GM12878 (cell line): ENCODE measurements at regions of chr16 and their contacts with region 1.

Region 1: DNA sequence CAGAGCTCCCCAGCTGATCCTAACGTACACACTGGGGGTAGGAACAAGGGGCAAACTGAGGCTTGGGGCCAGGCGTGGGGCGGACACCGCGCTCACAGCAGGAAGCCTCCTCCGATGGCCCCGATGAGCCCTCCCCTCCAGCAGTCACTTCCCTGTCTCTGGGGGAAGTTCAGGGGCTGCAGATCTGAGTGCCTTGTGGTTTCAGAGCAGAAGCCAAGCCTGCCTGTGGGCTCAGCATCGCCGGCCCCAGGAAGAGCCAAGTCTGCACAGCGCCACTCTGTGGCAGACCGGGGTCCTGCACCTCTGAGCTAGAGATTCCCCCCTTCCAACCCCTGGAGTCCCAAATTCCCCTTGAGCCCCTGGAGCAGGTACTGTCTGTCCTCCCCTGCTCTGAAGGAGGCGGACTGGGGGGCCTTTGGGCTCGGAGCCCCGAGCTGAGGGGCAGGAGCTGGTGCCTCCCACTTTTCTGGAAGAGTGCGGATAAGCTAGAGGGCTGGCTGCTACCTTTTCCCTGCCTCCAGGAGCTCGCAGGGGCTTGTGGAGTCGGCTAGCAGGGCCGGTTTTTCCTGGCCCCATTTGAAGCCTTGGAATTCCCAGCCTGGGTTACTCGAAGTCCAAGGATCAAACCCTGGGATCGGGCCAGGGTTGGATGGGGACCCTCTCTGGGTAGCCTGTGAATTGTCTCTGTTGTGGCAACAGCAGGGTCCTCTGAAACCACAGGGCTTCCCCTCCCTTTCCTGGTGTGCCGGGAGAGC is 2.9 kb downstream of the GSE1 start:
- DNase-seq: peak; percentile 47
- ATAC-seq: peak; percentile 68
- H3K4me3 ChIP-seq: peak overlapping the region; percentile 95; the same call in 1 of the 2 replicates
- H3K27ac ChIP-seq: peak overlapping the region; percentile 82
- H3K4me1 ChIP-seq: peaks cover 33% of the 10 kb centered on the region
- H3K27me3 ChIP-seq: no peaks in the 10 kb centered on the region
- CTCF ChIP-seq: peak; percentile 91 to 98 (median 98)
- EP300 ChIP-seq: no peak
- POLR2A ChIP-seq: peak; percentile 53; the same call in 1 of the 2 replicates
- RAD21 ChIP-seq: peak; percentile 61

Region 2: GRCh38 chr16:85428168-85428898 is 187.7 kb before region 1 on chr16:
- CTCF ChIA-PET with region 1: interaction called, 17 read pairs
- POLR2A ChIA-PET with region 1: no interaction called
- RAD21 ChIA-PET with region 1: interaction called, 5 read pairs
- SMC1A ChIA-PET with region 1: interaction called, 7 read pairs
- in situ Hi-C with region 1: loop called (anchors 25 kb)
- intact Hi-C with region 1: no loop called
- DNase-seq: no peak
- ATAC-seq: peak; percentile 99
- H3K4me3 ChIP-seq: no peak overlapping the region
- H3K27ac ChIP-seq: no peak overlapping the region
- H3K4me1 ChIP-seq: no peaks in the 10 kb centered on the region
- H3K27me3 ChIP-seq: peaks cover 0 to 3% of the 10 kb centered on the region in 2 experiments; a peak in 2 of 4 replicates
- CTCF ChIP-seq: peak; percentile 61 to 66 (median 62)
- EP300 ChIP-seq: no peak
- POLR2A ChIP-seq: no peak
- RAD21 ChIP-seq: 0 out of 2 replicates have a peak, but pooled peaks have one; percentile 25

Region 3: GRCh38 chr16:85448557-85449197 is 167.4 kb before region 1 on chr16:
- CTCF ChIA-PET with region 1: interaction called, 19 read pairs
- POLR2A ChIA-PET with region 1: no interaction called
- RAD21 ChIA-PET with region 1: interaction called, 12 read pairs
- SMC1A ChIA-PET with region 1: interaction called, 7 read pairs
- in situ Hi-C with region 1: loop called (anchors 25 kb)
- intact Hi-C with region 1: no loop called
- DNase-seq: no peak
- ATAC-seq: peak; percentile 49
- H3K4me3 ChIP-seq: no peak overlapping the region
- H3K27ac ChIP-seq: no peak overlapping the region
- H3K4me1 ChIP-seq: peaks cover 26% of the 10 kb centered on the region
- H3K27me3 ChIP-seq: no peaks in the 10 kb centered on the region; a peak in 1 of 4 replicates
- CTCF ChIP-seq: no peak
- EP300 ChIP-seq: no peak
- POLR2A ChIP-seq: no peak
- RAD21 ChIP-seq: no peak

Region 4: GRCh38 chr16:85528528-85529387 is 87.3 kb before region 1 on chr16:
- CTCF ChIA-PET with region 1: interaction called, 29 read pairs
- POLR2A ChIA-PET with region 1: no interaction called
- RAD21 ChIA-PET with region 1: interaction called, 4 read pairs
- SMC1A ChIA-PET with region 1: interaction called, 4 read pairs
- in situ Hi-C with region 1: no loop called
- intact Hi-C with region 1: no loop called
- DNase-seq: no peak
- ATAC-seq: peak; percentile 84
- H3K4me3 ChIP-seq: no peak overlapping the region
- H3K27ac ChIP-seq: no peak overlapping the region
- H3K4me1 ChIP-seq: no peaks in the 10 kb centered on the region
- H3K27me3 ChIP-seq: no peaks in the 10 kb centered on the region; a peak in 1 of 4 replicates
- CTCF ChIP-seq: peak; percentile 46 to 77 (median 60)
- EP300 ChIP-seq: no peak
- POLR2A ChIP-seq: no peak
- RAD21 ChIP-seq: peak; percentile 43

Region 5: GRCh38 chr16:85569615-85570212 is 46.3 kb before region 1 on chr16:
- CTCF ChIA-PET with region 1: interaction called, 15 read pairs
- POLR2A ChIA-PET with region 1: interaction called, 18 read pairs
- RAD21 ChIA-PET with region 1: interaction called, 15 read pairs
- SMC1A ChIA-PET with region 1: interaction called, 14 read pairs
- in situ Hi-C with region 1: no loop called
- intact Hi-C with region 1: no loop called
- DNase-seq: peak; percentile 74
- ATAC-seq: peak; percentile 76
- H3K4me3 ChIP-seq: peak overlapping the region; percentile 58
- H3K27ac ChIP-seq: peak overlapping the region; percentile 99
- H3K4me1 ChIP-seq: peaks cover 45% of the 10 kb centered on the region
- H3K27me3 ChIP-seq: no peaks in the 10 kb centered on the region
- CTCF ChIP-seq: no peak
- EP300 ChIP-seq: peak; percentile 32 to 33; a peak in 1 of 4 replicates
- POLR2A ChIP-seq: peak; percentile 74
- RAD21 ChIP-seq: no peak